Psoas muscle (tissue), 8 donors: ENCODE measurements at regions of chr1 and their contacts with region 1.

Region 1: GRCh38 chr1:183012301-183012994 is 10.8 kb upstream of the LAMC1 start:
- DNase-seq: no peak
- ATAC-seq: no peak
- H3K4me3 ChIP-seq: no peak overlapping the region
- H3K27ac ChIP-seq: no peak overlapping the region
- H3K4me1 ChIP-seq: no peaks in the 10 kb centered on the region
- H3K27me3 ChIP-seq: no peaks in the 10 kb centered on the region
- CTCF ChIP-seq: no peak

Region 2: DNA sequence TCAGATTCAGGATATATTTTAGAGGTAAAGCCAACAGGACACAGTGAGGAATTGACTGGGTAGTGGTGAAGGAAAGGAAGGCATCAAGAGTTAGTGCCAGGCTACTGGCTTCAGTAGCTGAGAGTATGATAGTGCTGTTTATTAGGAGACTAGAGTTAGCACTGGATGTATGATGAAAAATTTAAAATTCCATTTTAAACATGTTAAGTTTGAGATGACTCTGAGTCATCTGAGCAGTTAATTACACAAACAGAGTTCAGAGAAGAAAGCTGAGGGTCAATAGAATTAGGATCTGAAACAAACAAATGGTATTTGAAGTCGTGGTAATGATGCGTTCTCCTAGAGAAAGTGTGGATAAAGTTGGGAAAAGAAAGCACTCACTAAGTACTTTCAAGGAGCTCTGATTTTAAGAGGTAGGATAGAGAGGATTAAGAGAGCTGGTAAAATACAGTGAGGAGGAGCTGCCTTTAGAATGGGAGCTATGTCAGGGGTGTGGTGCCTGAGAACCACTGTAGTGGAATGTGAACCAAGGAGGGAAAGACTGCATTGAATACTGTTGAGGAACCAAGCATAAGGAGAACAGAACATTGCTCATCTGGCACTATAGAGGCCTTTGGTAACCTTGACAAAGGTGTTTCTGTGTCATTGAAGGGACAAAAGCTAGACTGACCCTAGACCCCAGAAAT is 37.8 kb before region 1 on chr1:
- intact Hi-C with region 1: loop called in 1 of 2 experiments (anchors 5 kb)
- DNase-seq: no peak
- ATAC-seq: no peak
- H3K4me3 ChIP-seq: no peak overlapping the region
- H3K27ac ChIP-seq: no peak overlapping the region
- H3K4me1 ChIP-seq: no peaks in the 10 kb centered on the region
- H3K27me3 ChIP-seq: no peaks in the 10 kb centered on the region
- CTCF ChIP-seq: no peak